ENCODE measurements at regions of chr1 and their contacts with region 1.

Region 1: GRCh38 chr1:203340112-203340804 is 10.7 kb downstream of the FMOD start:
- DNase-seq: peak; percentile 97
- H3K27ac ChIP-seq: no peak overlapping the region
- CTCF ChIP-seq: peak; percentile 92

Region 2: GRCh38 chr1:203153989-203154821 is 186.1 kb before region 1 on chr1:
- CTCF ChIA-PET with region 1: no interaction called
- POLR2A ChIA-PET with region 1: no interaction called
- DNase-seq: peak; percentile 84
- H3K27ac ChIP-seq: peak overlapping the region; percentile 69
- CTCF ChIP-seq: no peak

Region 3: GRCh38 chr1:203273206-203273868 is 66.9 kb before region 1 on chr1:
- CTCF ChIA-PET with region 1: interaction called, 291 read pairs
- POLR2A ChIA-PET with region 1: no interaction called
- DNase-seq: peak; percentile 89
- H3K27ac ChIP-seq: peak overlapping the region; percentile 55
- CTCF ChIP-seq: peak; percentile 98

Region 4: GRCh38 chr1:203354246-203354645 is 14.0 kb after region 1 on chr1:
- CTCF ChIA-PET with region 1: interaction called, 15 read pairs
- POLR2A ChIA-PET with region 1: no interaction called
- DNase-seq: no peak
- H3K27ac ChIP-seq: no peak overlapping the region
- CTCF ChIP-seq: no peak

Region 5: DNA sequence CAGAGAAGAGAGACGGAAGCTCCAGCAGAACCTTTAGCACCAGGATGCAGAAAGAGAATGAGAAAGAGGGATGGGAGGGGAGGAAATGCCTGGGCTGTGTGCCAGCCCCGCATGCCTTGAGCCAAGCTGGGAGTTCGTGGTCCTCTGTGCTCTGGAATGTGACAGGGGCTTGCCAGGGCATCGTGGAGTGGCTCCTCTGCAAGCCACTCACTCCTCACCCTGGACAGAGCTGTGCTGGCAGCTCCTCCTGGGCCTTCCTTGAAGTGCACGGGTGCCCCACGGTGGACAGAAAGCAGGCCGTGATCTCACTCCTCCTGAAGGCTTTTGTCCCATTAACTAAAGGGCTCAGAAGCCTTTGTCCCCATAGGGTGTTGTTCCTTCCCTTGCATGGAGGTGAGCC is 100.5 kb after region 1 on chr1:
- CTCF ChIA-PET with region 1: interaction called, 23 read pairs
- POLR2A ChIA-PET with region 1: no interaction called
- DNase-seq: peak; percentile 43
- H3K27ac ChIP-seq: no peak overlapping the region
- CTCF ChIP-seq: peak; percentile 28

Region 6: GRCh38 chr1:203454986-203455471 is 114.8 kb after region 1 on chr1:
- CTCF ChIA-PET with region 1: no interaction called
- POLR2A ChIA-PET with region 1: no interaction called
- DNase-seq: no peak
- H3K27ac ChIP-seq: no peak overlapping the region
- CTCF ChIP-seq: no peak

Region 7: DNA sequence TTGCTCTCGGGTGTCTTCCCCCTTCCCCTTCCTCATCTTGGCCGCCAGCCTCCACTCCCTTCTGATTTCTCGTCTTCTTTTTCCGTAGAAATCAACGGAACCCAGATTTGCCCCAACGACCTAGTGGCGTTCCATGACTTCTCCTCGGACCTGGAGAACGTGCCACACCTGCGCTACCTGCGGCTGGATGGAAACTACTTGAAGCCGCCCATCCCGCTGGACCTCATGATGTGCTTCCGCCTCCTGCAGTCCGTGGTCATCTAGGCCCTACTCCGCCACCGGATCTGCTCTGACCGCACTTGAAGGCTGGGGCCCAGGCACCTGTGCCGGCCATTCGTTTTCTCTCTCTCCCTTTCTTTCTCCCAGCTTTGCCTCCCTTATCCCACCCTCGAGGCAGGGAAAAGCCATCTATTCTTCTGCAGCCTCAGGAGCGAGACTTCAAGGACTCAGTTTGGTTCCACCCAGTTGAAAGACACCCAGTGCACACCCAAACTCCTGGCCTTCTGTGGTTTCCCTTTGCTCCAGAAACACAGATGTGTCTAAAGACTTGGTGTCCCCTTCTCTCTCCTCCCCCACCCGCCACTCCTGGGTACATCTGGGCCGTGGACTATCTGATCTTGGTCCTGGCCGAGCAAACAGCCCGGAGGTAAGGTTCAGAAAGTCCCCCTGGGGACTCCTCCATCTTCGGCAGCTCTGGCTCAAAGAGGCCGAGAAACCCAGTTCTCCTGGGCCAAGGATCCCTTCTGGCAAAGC is 146.5 kb after region 1 on chr1:
- CTCF ChIA-PET with region 1: interaction called, 80 read pairs
- POLR2A ChIA-PET with region 1: no interaction called
- DNase-seq: no peak
- H3K27ac ChIP-seq: peak overlapping the region; percentile 38; the same call in 1 of the 2 replicates
- CTCF ChIP-seq: no peak